ENCODE measurements at regions of chr1 and their contacts with region 1.

Region 1: DNA sequence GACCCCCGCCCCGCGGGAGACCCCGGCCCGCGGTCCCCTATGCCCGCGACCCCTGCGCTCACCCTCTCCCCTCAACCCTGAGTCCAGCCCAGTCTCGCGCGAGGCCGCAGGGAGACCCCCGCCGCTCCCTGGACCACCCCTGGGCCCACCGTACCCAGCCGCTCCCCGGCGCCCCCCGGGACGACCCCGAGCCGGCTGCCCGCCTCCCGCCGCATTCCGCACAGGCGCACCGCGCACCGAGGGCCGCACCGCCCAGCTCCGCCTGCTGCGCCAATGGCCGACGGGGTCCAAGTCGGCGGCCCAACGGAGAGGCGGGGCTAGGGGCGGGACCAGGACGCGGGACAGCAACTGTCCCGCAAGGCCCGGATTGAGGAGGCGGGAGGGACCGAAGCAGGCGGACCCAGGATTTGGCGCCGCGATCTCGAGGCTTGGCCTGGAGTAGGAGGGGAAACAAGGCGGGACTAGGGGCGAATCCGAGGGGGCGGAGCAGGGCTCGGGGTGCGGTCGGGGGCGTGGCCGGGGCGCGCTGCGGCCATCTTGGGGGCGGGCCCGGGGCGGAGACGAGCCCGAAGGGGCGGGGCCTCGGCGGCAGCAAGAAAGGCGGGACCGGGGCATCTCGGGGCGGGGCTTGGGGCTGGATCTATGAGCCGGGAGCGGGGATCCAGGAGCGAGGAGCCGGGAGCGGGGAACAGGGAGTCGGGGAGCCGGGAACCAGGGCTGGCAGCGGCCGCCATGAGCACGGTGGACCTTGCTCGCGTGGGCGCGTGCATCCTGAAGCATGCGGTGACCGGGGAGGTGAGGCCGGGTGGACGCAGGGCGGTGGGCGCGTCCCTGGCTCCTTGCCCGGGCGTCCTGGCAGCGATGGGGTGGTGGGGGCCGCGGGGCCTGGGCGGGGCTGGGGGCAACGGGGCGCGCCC is at the start of gene PRXL2B:
- DNase-seq: peak; percentile 94
- ATAC-seq: peak; percentile 86
- H3K4me3 ChIP-seq: peak within 1 kb of the TSS; percentile 75 to 90
- H3K27ac ChIP-seq: peak within 1 kb of the TSS; percentile 81
- H3K4me1 ChIP-seq: peaks cover 4 to 31% of the 10 kb centered on the region in 2 experiments; a peak in 3 of 4 replicates
- H3K27me3 ChIP-seq: no peaks in the 10 kb centered on the region
- CTCF ChIP-seq: no peak
- POLR2A ChIP-seq: peak; percentile 27
- RAD21 ChIP-seq: no peak
- total RNA-seq, gene PRXL2B: 32.2 TPM

Region 2: DNA sequence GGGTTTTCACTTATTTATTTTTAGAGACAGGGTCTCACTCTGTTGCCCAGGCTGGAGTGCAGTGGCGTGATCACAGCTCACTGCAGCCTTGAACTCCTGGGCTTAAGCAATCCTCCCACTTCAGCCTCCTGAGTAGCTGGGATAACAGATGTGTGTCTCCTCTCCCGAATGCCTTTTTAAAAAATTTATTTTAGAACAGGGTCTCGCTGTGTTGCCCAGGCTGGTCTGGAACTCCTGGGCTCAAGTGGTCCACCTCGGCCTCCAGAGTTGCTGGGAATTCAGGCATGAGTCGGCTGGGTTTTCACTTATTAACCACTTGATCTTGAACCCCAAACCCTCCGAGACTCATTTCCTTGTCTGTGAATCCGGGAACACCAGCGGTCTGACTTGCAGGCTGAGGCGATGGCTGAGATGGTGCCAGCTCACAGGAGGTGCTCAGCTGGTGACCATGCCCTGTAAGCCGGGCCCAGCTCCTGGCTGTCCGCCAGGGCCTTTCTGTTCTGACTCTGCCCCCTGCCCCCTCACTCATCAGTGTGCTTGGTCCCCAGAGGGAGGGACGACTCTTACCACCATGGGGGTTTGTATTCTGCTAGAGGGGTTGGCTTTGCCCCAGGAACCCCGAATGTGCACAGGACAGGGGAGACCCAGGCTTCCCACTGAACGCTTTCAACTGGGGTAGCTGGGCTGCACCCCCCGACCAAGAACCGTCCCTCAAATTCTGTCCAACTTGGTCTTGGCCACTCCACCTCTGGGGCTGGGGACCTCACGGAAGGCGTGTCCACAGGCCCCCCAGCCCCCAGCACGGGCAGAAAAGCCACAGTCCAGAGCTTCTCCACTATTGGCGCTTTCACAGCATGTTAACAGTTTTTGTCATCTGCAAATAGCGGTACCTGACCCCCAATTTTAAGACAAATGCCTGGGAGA is 23.9 kb after region 1 on chr1:
- CTCF ChIA-PET with region 1: no interaction called
- POLR2A ChIA-PET with region 1: interaction called, 4 read pairs
- RAD21 ChIA-PET with region 1: interaction called in 1 of 2 experiments, 9 read pairs
- intact Hi-C with region 1: loop called (anchors 1 kb)
- DNase-seq: no peak
- ATAC-seq: no peak
- H3K4me3 ChIP-seq: peak overlapping the region; percentile 36 to 56
- H3K27ac ChIP-seq: no peak overlapping the region
- H3K4me1 ChIP-seq: peaks cover 11 to 16% of the 10 kb centered on the region in 2 experiments
- H3K27me3 ChIP-seq: no peaks in the 10 kb centered on the region; the same call in 1 of the 2 replicates
- CTCF ChIP-seq: no peak
- POLR2A ChIP-seq: no peak
- RAD21 ChIP-seq: no peak

Region 3: GRCh38 chr1:2642560-2643413 is 56.4 kb after region 1 on chr1:
- CTCF ChIA-PET with region 1: no interaction called
- POLR2A ChIA-PET with region 1: no interaction called
- RAD21 ChIA-PET with region 1: no interaction called
- intact Hi-C with region 1: loop called (anchors 2 kb)
- DNase-seq: peak; percentile 73
- ATAC-seq: peak; percentile 84
- H3K4me3 ChIP-seq: peak overlapping the region; percentile 82 to 92
- H3K27ac ChIP-seq: peak overlapping the region; percentile 92
- H3K4me1 ChIP-seq: peaks cover 6 to 28% of the 10 kb centered on the region in 2 experiments; a peak in 3 of 4 replicates
- H3K27me3 ChIP-seq: no peaks in the 10 kb centered on the region
- CTCF ChIP-seq: no peak
- POLR2A ChIP-seq: peak; percentile 42
- RAD21 ChIP-seq: no peak

Region 4: GRCh38 chr1:2786329-2787162 is 200.1 kb after region 1 on chr1:
- CTCF ChIA-PET with region 1: no interaction called
- POLR2A ChIA-PET with region 1: no interaction called
- RAD21 ChIA-PET with region 1: no interaction called
- intact Hi-C with region 1: no loop called
- DNase-seq: no peak
- ATAC-seq: peak; percentile 92
- H3K4me3 ChIP-seq: no peak overlapping the region
- H3K27ac ChIP-seq: no peak overlapping the region
- H3K4me1 ChIP-seq: no peaks in the 10 kb centered on the region
- H3K27me3 ChIP-seq: no peaks in the 10 kb centered on the region
- CTCF ChIP-seq: peak; percentile 61 to 89 (median 88); a peak in 5 of 6 replicates
- POLR2A ChIP-seq: no peak
- RAD21 ChIP-seq: peak; percentile 78

Measured in HCT116 (cell line).